ENCODE measurements at regions of chr16 and their contacts with region 1.

Region 1: GRCh38 chr16:88856828-88857733 is at the starts of genes GALNS and TRAPPC2L:
- DNase-seq: peak; percentile 89 to 95 (median 94)
- H3K4me3 ChIP-seq: peak within 1 kb of the TSS; percentile 83 to 98 (median 93)
- H3K27ac ChIP-seq: peak within 1 kb of the TSS in 1 of 2 experiments; percentile 61
- H3K4me1 ChIP-seq: peaks cover 3 to 43% (median 33%) of the 10 kb centered on the region in 4 experiments
- H3K27me3 ChIP-seq: no peaks in the 10 kb centered on the region

Region 2: GRCh38 chr16:88838991-88839529 is 18.0 kb before region 1 on chr16:
- CTCF ChIA-PET with region 1: interaction called, 10 read pairs
- POLR2A ChIA-PET with region 1: no interaction called
- DNase-seq: peak in 1 of 3 donors; percentile 10
- H3K4me3 ChIP-seq: no peak overlapping the region
- H3K27ac ChIP-seq: no peak overlapping the region
- H3K4me1 ChIP-seq: no peaks in the 10 kb centered on the region
- H3K27me3 ChIP-seq: no peaks in the 10 kb centered on the region